Ovary (tissue), 10 donors: ENCODE measurements at regions of chr5 and their contacts with region 1.

Region 1: GRCh38 chr5:164680812-164681520 is 1175.5 kb downstream of the MAT2B start:
- DNase-seq: no peak
- H3K4me3 ChIP-seq: no peak overlapping the region
- H3K27ac ChIP-seq: no peak overlapping the region
- H3K4me1 ChIP-seq: no peaks in the 10 kb centered on the region
- H3K27me3 ChIP-seq: no peaks in the 10 kb centered on the region
- CTCF ChIP-seq: no peak
- EP300 ChIP-seq: no peak
- POLR2A ChIP-seq: no peak

Region 2: GRCh38 chr5:164708821-164709220 is 27.9 kb after region 1 on chr5:
- intact Hi-C with region 1: no loop called
- DNase-seq: no peak
- H3K4me3 ChIP-seq: no peak overlapping the region
- H3K27ac ChIP-seq: no peak overlapping the region
- H3K4me1 ChIP-seq: no peaks in the 10 kb centered on the region
- H3K27me3 ChIP-seq: no peaks in the 10 kb centered on the region
- CTCF ChIP-seq: no peak
- EP300 ChIP-seq: no peak
- POLR2A ChIP-seq: no peak

Region 3: GRCh38 chr5:164722702-164723101 is 41.7 kb after region 1 on chr5:
- intact Hi-C with region 1: loop called in 1 of 4 experiments (anchors 5 kb)
- DNase-seq: no peak
- H3K4me3 ChIP-seq: no peak overlapping the region
- H3K27ac ChIP-seq: no peak overlapping the region
- H3K4me1 ChIP-seq: no peaks in the 10 kb centered on the region
- H3K27me3 ChIP-seq: no peaks in the 10 kb centered on the region
- CTCF ChIP-seq: no peak
- EP300 ChIP-seq: no peak
- POLR2A ChIP-seq: no peak